ENCODE measurements at regions of chr6 and their contacts with region 1.

Region 1: DNA sequence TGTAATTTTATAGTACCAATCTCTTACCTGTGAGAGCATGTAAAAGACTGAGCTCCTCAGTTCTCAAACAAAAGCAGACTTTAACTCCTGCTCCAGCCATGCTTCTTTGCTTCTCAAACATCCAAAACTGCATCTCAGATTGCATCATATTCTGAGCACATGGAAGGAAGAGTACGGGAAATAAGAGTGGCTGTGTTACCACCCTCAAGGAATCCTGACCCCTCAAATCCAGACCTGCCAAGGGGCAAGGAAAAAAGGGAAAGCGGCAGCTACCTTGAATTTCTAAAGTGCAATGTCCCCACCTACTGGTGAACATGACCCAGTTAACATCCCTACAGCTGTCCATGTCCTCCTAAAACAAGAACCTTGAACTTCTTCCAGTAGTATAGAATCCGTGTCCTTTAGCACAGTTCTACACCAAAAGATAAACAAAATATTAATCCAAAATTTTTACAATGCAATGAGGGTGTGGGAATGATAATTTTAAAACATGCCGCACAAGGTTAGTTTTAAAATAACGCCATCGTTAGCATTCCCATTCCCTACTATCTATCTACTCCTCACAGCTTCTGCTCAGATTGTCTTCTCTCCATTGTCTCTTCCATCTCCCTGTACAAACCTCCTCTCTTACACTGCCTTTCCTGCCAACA is 34.1 kb upstream of the HLA-DQB1 start:
- DNase-seq: peak; percentile 20 to 37
- H3K4me3 ChIP-seq: no peak overlapping the region
- H3K27ac ChIP-seq: no peak overlapping the region
- H3K4me1 ChIP-seq: no peaks in the 10 kb centered on the region
- H3K27me3 ChIP-seq: no peaks in the 10 kb centered on the region
- CTCF ChIP-seq: peak in 4 of 6 experiments; percentile 42 to 74 (median 72)
- POLR2A ChIP-seq: no peak

Region 2: DNA sequence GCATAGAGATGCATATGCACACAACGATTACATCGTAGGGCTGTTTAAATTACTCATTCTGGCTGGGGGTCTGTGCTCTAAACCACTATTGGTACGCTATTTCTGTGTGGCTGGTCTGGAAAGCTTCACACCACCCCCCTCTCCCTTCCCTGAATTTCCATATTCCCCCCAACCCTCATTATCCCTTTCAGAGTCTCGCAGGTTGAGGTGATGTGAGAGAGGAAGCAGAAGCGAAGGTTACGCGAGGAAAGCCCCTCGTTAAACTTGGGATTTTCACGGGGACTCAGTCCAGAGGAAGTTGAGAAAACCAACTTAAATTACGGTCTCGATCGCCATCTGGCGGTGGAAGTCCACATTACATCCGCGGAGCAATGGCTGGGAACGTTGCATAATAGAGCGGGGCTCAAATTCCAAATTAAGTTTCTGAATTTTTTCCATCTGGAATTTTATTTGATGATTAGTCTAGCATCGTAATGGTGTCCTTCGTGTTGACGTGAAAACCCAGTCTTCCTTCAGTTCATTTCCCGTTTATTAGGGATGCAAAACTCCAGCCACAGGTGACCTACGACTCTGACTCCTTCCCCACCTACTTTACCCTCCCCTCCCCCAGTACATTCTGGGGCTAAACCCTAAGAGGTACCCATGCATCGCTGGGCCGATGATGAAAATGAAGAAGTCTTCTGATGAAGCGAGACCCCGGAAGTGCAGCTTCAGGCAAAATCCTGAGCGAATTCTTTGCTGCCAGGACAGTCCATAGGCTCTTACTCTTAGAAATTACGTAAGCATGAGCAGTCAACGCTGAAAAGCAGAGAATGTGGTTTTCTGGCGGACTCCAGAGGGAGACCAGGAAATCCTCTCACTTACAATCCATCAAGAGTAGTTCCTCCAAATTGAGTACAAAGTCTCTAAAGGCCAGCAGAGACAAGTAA is 96.6 kb after region 1 on chr6:
- intact Hi-C with region 1: loop called (anchors 10 kb)
- DNase-seq: peak; percentile 66 to 71
- H3K4me3 ChIP-seq: no peak overlapping the region
- H3K27ac ChIP-seq: no peak overlapping the region
- H3K4me1 ChIP-seq: no peaks in the 10 kb centered on the region
- H3K27me3 ChIP-seq: no peaks in the 10 kb centered on the region
- CTCF ChIP-seq: peak; percentile 81 to 92 (median 87)
- POLR2A ChIP-seq: no peak